Mammary epithelial cell (primary cell): ENCODE measurements at regions of chr4 and their contacts with region 1.

Region 1: DNA sequence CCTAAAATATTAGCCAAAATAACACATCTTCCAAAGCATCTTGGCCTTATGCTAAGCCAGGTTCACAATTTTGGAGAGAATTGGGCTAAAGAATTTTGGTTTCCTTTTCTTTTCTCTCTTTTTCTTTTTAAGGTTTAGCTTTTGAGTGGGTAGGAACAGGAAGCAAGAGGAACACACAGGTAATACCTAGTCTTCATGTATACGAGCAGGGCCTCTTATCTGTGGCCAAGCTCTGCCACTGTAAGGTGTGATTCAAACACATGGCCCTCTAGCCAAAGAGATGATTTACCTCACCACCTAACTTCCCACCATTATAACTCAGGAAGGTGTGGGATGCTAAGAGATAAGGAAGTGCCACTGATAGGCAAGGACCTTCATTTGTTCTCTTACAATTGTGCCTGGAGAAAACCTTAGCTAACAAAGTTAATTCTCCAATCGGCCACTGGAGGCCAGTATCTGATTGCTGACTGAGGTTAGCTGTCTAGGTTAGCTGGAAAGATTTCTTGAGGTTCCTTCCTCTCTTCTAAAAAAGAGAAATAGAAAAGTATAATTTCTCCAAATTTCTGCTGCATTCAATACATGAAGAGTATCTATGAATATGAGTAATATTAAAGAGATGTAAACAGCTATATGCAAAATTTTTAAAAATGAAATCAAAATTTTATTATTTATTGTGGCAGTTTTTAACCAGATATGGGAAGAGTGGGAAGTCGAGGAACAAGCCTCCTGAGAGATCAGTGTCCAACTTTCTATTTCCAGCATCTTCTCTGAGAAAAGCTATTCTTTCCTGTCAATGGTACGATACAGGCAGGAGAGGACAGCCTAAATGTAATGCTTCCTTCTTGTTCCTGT is 30.1 kb upstream of the BBS7 start:
- DNase-seq: peak; percentile 33
- H3K4me3 ChIP-seq: no peak overlapping the region
- H3K27ac ChIP-seq: no peak overlapping the region
- H3K4me1 ChIP-seq: no peaks in the 10 kb centered on the region
- H3K27me3 ChIP-seq: peaks cover 9% of the 10 kb centered on the region
- CTCF ChIP-seq: peak; percentile 64 to 81

Region 2: DNA sequence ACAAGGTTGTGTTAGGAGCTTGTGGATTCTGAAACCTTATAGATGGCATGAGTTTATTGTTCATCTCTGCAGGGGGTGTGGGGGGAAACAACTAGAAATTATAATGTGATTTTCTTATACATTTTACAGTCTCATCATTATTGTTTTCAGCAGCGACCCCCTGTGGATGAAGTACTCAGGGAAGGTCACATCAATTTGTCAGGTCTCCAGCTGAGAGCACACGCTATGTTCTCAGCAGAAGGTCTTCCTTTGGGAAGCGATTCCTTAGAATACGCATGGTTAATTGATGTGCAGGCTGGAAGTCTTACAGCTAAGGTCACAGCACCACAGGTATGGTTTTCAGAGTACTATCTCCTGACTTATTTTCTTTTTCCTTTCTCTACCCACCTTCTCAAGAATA is 324.0 kb after region 1 on chr4:
- CTCF ChIA-PET with region 1: no interaction called
- dilution Hi-C with region 1: no loop called
- in situ Hi-C with region 1: no loop called
- intact Hi-C with region 1: loop called (anchors 2 kb)
- DNase-seq: peak; percentile 0
- H3K4me3 ChIP-seq: no peak overlapping the region
- H3K27ac ChIP-seq: no peak overlapping the region
- H3K4me1 ChIP-seq: no peaks in the 10 kb centered on the region
- H3K27me3 ChIP-seq: no peaks in the 10 kb centered on the region
- CTCF ChIP-seq: peak; percentile 14 to 27

Region 3: GRCh38 chr4:122450847-122451246 is 550.5 kb after region 1 on chr4:
- CTCF ChIA-PET with region 1: no interaction called
- dilution Hi-C with region 1: no loop called
- in situ Hi-C with region 1: no loop called
- intact Hi-C with region 1: loop called (anchors 5 kb)
- DNase-seq: peak; percentile 17
- H3K4me3 ChIP-seq: no peak overlapping the region
- H3K27ac ChIP-seq: no peak overlapping the region
- H3K4me1 ChIP-seq: no peaks in the 10 kb centered on the region
- H3K27me3 ChIP-seq: peaks cover 2% of the 10 kb centered on the region
- CTCF ChIP-seq: peak in 1 of 2 donors; percentile 56

Region 4: GRCh38 chr4:122716825-122717448 is 816.6 kb after region 1 on chr4:
- CTCF ChIA-PET with region 1: no interaction called
- dilution Hi-C with region 1: no loop called
- in situ Hi-C with region 1: no loop called
- intact Hi-C with region 1: loop called (anchors 5 kb)
- DNase-seq: peak; percentile 48
- H3K4me3 ChIP-seq: no peak overlapping the region
- H3K27ac ChIP-seq: no peak overlapping the region
- H3K4me1 ChIP-seq: peaks cover 3% of the 10 kb centered on the region
- H3K27me3 ChIP-seq: no peaks in the 10 kb centered on the region
- CTCF ChIP-seq: peak; percentile 90 to 93

Region 5: DNA sequence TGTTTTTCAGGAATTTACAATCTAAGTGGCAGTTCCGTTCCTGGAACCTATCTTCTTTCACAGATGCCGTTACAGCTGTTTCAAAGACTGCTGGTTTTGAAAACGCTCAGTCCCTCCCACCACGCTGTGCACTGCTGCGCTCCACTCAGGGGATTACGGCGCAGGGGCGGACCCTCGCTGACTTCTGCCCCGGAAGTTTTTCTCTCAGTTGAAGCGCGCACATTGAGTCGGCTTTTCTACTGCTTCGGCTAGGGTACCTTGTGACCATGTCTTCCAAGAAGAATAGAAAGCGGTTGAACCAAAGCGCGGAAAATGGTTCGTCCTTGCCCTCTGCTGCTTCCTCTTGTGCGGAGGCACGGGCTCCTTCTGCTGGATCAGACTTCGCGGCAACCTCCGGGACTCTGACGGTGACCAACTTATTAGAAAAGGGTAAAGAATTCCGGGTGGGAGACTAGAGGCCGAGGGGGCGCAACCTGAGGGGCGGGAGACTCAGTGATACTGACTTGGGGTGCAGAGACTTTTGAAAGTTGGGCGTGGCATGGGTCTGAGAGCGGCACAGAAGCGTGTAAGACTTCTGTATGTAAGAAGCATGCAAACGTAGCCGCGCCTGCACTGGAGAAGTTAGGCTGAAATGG is 1022.6 kb after region 1 on chr4:
- CTCF ChIA-PET with region 1: no interaction called
- dilution Hi-C with region 1: no loop called
- in situ Hi-C with region 1: no loop called
- intact Hi-C with region 1: loop called (anchors 10 kb)
- DNase-seq: peak; percentile 81
- H3K4me3 ChIP-seq: peak overlapping the region; percentile 72 to 99 (median 85)
- H3K27ac ChIP-seq: peak overlapping the region; percentile 61
- H3K4me1 ChIP-seq: peaks cover 8% of the 10 kb centered on the region
- H3K27me3 ChIP-seq: no peaks in the 10 kb centered on the region
- CTCF ChIP-seq: no peak